A673 (cell line): ENCODE measurements at regions of chr1 and their contacts with region 1.

Region 1: DNA sequence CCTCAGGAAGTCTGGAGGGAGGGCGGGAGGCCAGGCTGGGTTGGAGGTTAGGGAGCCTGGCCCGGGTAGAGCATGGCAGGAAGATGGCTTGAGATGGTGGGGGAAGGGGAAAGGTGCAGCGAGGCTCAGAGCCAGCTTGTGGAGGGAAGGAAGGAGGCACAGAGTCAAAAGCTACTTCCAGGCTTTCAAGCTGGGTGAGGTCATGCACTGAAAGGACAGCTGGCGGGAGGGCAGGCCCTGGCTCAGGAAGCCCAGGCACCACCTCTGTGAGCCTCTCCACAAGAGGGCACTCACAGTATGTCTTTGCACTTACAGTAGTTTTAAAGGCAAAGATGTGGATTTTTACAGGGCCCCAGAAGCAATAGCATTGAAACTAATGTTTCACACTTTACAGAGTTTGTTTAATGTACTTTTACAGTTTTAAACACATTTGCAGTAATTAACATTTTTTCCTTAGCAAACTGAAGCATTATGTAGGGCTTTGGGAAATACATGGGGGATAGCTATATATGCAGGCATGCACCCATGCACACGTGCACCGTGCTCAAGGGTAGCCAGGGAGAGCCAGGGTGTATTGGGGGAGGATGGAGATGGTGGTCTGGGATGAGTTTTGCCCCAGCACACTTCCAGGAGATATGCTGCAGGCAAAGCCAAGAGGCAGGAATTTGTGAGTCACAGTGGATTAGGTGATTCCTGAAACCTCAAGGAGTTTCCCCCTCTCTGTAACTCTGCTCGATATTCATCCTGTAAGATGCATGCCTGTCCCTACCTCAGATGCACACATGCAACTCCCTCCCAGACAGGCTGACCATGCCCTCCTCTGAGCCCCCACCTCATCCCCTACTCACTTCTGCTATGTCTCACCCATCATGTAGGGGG is 6.1 kb upstream of the ADAM15 start:
- DNase-seq: peak; percentile 48
- H3K4me3 ChIP-seq: no peak overlapping the region
- H3K27ac ChIP-seq: no peak overlapping the region
- H3K4me1 ChIP-seq: peaks cover 7% of the 10 kb centered on the region
- H3K27me3 ChIP-seq: no peaks in the 10 kb centered on the region
- CTCF ChIP-seq: peak; percentile 65

Region 2: DNA sequence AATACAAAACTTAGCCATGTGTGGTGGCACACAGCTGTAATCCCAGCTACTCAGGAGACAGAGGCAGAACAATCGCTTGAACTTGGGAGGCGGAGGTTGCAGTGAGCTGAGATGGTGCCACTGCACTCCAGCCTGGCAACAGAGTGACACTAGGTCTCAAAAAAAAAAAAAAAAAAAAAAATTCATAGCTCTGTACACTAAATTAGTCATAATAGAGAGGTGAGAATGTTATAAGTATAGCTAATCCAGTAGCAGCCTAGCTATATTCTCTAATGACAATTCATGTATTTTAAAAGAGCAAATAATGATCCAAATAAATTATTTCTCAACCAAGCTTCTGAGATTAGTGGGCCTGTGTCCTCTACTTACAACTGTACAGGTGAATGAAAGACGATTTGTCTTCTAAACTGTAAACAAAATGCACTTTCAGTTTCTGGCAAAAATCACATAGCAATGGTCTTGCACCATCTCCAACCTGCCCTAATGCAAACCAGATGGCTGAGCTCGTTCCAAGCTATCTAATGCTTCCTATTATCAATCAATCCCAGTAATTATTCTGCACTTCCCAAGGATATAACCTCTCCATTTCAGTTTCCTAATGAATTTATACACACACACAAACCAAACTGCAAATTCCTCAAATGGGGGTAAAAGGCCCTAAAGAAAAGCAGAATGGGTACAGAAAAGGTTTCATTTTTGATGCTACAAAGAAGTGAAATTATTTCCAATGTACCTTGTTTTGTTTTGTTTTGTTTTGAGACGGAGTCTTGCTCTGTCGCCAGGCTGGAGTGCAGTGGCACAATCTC is 1178.8 kb before region 1 on chr1:
- CTCF ChIA-PET with region 1: no interaction called
- POLR2A ChIA-PET with region 1: interaction called, 18 read pairs
- intact Hi-C with region 1: no loop called
- DNase-seq: peak; percentile 75
- H3K4me3 ChIP-seq: peak overlapping the region; percentile 16
- H3K27ac ChIP-seq: peak overlapping the region; percentile 12
- H3K4me1 ChIP-seq: peaks cover 13% of the 10 kb centered on the region
- H3K27me3 ChIP-seq: no peaks in the 10 kb centered on the region
- CTCF ChIP-seq: no peak

Region 3: DNA sequence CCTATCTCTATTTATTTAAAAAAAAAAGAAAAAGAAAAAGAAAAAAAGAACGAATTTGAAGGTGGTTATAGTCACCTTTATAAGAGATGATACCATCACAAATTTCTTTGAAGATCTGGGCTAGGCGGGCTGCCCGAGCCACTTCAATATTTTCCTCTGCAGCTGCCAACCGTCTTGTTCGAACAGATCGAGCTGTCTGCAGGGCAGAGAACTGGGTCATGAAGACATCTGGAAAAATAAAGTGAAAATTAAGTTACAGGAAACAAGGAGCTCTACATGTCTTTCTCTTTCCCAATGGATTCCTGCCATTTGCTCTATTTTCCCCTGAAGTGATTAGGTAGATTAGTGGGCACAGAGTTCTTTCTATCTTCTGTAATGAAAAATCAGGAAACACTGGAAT is 307.6 kb after region 1 on chr1:
- CTCF ChIA-PET with region 1: no interaction called
- POLR2A ChIA-PET with region 1: no interaction called
- intact Hi-C with region 1: no loop called
- DNase-seq: no peak
- H3K4me3 ChIP-seq: no peak overlapping the region
- H3K27ac ChIP-seq: no peak overlapping the region
- H3K4me1 ChIP-seq: no peaks in the 10 kb centered on the region
- H3K27me3 ChIP-seq: no peaks in the 10 kb centered on the region
- CTCF ChIP-seq: no peak

Region 4: GRCh38 chr1:155437405-155437804 is 392.4 kb after region 1 on chr1:
- CTCF ChIA-PET with region 1: no interaction called
- POLR2A ChIA-PET with region 1: no interaction called
- intact Hi-C with region 1: no loop called
- DNase-seq: no peak
- H3K4me3 ChIP-seq: no peak overlapping the region
- H3K27ac ChIP-seq: no peak overlapping the region
- H3K4me1 ChIP-seq: no peaks in the 10 kb centered on the region
- H3K27me3 ChIP-seq: no peaks in the 10 kb centered on the region
- CTCF ChIP-seq: no peak